Caco-2 (cell line): ENCODE measurements at regions of chr19 and their contacts with region 1.

Region 1: DNA sequence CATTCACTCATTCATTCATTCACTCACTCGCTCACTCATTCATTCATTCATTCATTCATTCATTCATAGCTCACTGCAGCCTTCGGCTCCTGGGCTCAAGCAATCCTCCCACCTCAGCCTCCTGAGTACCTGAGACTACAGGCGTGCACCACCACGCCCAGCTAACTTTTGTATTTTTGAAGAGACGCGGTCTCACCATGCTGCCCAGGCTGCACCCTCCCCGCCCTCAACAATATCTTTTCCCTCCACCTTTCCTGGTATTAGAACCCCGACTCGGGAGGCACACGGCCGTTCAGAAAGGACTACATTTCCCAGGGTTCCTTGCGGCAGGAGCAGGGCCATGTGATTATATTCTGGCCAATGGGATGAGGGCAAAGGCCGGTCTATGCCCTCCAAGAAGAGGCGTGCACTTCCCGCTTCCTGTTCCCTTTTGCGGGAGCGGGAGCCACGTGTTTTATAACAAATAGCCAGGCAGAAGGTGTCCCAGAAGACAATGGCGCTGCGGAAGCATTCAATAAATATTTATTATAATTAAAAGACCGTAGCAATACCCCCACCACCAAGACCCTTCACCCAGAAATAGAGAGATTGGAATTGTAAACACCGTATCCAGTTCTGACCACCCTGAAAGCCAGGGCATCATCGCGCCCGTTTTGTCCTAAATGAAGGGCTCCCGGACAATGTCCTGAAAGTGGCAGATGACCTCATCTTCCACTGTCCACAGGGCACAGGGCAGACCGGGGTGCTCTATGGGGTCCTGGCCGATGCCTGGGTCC is 15.9 kb downstream of the TICAM1 start:
- DNase-seq: peak; percentile 89 to 94
- H3K4me3 ChIP-seq: peak overlapping the region; percentile 44
- H3K4me3 Mint-ChIP-seq: peak overlapping the region; percentile 80
- H3K27ac Mint-ChIP-seq: peak overlapping the region; percentile 39
- H3K4me1 ChIP-seq: peaks cover 3% of the 10 kb centered on the region; the same call in 1 of the 2 replicates
- H3K4me1 Mint-ChIP-seq: peaks cover 9% of the 10 kb centered on the region
- H3K27me3 ChIP-seq: no peaks in the 10 kb centered on the region
- H3K27me3 Mint-ChIP-seq: no peaks in the 10 kb centered on the region
- CTCF ChIP-seq: no peak

Region 2: DNA sequence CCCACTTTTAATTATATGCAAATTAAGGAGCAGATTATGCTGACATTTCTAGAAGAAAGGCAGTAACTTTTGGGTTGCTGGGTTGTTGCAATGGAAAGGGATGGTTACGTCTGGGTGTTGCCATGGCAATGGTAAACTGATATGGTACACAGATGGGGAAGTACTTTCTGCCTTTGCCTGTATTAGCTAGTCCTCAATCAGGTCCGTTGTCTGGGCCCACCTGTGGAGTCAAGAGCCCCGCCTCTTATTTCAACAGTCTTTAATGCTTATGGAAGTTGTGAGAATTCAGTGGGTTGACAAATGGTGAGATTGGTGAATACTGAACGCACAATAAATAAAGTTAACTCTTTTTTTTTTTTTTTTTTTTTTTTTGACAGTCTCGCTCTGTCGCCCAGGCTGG is 61.4 kb before region 1 on chr19:
- CTCF ChIA-PET with region 1: no interaction called
- POLR2A ChIA-PET with region 1: no interaction called
- intact Hi-C with region 1: no loop called
- DNase-seq: no peak
- H3K4me3 ChIP-seq: no peak overlapping the region
- H3K4me3 Mint-ChIP-seq: no peak overlapping the region
- H3K27ac Mint-ChIP-seq: no peak overlapping the region
- H3K4me1 ChIP-seq: no peaks in the 10 kb centered on the region; the same call in 1 of the 2 replicates
- H3K4me1 Mint-ChIP-seq: no peaks in the 10 kb centered on the region
- H3K27me3 ChIP-seq: no peaks in the 10 kb centered on the region
- H3K27me3 Mint-ChIP-seq: peaks cover 7% of the 10 kb centered on the region
- CTCF ChIP-seq: no peak

Region 3: GRCh38 chr19:4851551-4852290 is 36.1 kb after region 1 on chr19:
- CTCF ChIA-PET with region 1: interaction called, 37 read pairs
- POLR2A ChIA-PET with region 1: no interaction called
- intact Hi-C with region 1: no loop called
- DNase-seq: peak; percentile 70 to 76
- H3K4me3 ChIP-seq: no peak overlapping the region
- H3K4me3 Mint-ChIP-seq: no peak overlapping the region
- H3K27ac Mint-ChIP-seq: no peak overlapping the region
- H3K4me1 ChIP-seq: no peaks in the 10 kb centered on the region
- H3K4me1 Mint-ChIP-seq: no peaks in the 10 kb centered on the region
- H3K27me3 ChIP-seq: no peaks in the 10 kb centered on the region
- H3K27me3 Mint-ChIP-seq: no peaks in the 10 kb centered on the region
- CTCF ChIP-seq: peak; percentile 78 to 84

Region 4: DNA sequence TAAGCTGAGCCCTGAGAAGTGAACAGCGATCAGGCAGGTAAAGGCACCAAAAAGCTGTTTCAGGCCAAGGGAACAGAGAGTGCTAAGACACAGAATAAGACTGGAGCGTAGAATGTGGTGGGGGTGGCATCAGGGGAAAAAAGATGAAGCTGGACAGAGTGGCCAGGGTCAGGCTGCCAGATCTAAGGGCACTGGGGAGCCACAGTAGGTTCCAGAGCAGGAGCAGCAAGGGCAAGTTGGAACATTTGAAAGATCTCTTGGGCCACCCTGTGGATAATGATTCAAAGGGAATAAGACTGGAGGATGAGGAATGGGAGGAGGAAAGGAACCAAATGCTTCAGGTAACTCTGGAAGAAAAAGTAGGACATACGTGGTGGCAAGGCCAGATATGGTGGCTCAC is 58.3 kb after region 1 on chr19:
- CTCF ChIA-PET with region 1: no interaction called
- POLR2A ChIA-PET with region 1: no interaction called
- intact Hi-C with region 1: no loop called
- DNase-seq: no peak
- H3K4me3 ChIP-seq: no peak overlapping the region
- H3K4me3 Mint-ChIP-seq: no peak overlapping the region
- H3K27ac Mint-ChIP-seq: no peak overlapping the region
- H3K4me1 ChIP-seq: no peaks in the 10 kb centered on the region
- H3K4me1 Mint-ChIP-seq: peaks cover 6% of the 10 kb centered on the region
- H3K27me3 ChIP-seq: no peaks in the 10 kb centered on the region
- H3K27me3 Mint-ChIP-seq: no peaks in the 10 kb centered on the region
- CTCF ChIP-seq: no peak